PC-3 (cell line): ENCODE measurements at regions of chr19 and their contacts with region 1.

Region 1: GRCh38 chr19:6125571-6125989 is 9.9 kb upstream of the ACSBG2 start:
- DNase-seq: peak; percentile 95
- ATAC-seq: peak; percentile 90
- H3K4me3 ChIP-seq: no peak overlapping the region
- H3K27ac ChIP-seq: no peak overlapping the region
- H3K4me1 ChIP-seq: no peaks in the 10 kb centered on the region
- H3K27me3 ChIP-seq: no peaks in the 10 kb centered on the region
- CTCF ChIP-seq: peak; percentile 99

Region 2: GRCh38 chr19:5987077-5987818 is 138.3 kb before region 1 on chr19:
- CTCF ChIA-PET with region 1: interaction called, 13 read pairs
- POLR2A ChIA-PET with region 1: no interaction called
- intact Hi-C with region 1: loop called (anchors 1 kb)
- DNase-seq: peak; percentile 96
- ATAC-seq: peak; percentile 57
- H3K4me3 ChIP-seq: peak overlapping the region; percentile 57
- H3K27ac ChIP-seq: no peak overlapping the region
- H3K4me1 ChIP-seq: peaks cover 9% of the 10 kb centered on the region; the same call in 1 of the 2 replicates
- H3K27me3 ChIP-seq: no peaks in the 10 kb centered on the region
- CTCF ChIP-seq: peak; percentile 99

Region 3: GRCh38 chr19:6048808-6049405 is 76.7 kb before region 1 on chr19:
- CTCF ChIA-PET with region 1: interaction called, 36 read pairs
- POLR2A ChIA-PET with region 1: no interaction called
- intact Hi-C with region 1: loop called (anchors 1 kb)
- DNase-seq: peak; percentile 93
- ATAC-seq: peak; percentile 98
- H3K4me3 ChIP-seq: peak overlapping the region; percentile 33
- H3K27ac ChIP-seq: no peak overlapping the region
- H3K4me1 ChIP-seq: peaks cover 9% of the 10 kb centered on the region
- H3K27me3 ChIP-seq: no peaks in the 10 kb centered on the region
- CTCF ChIP-seq: peak; percentile 91

Region 4: DNA sequence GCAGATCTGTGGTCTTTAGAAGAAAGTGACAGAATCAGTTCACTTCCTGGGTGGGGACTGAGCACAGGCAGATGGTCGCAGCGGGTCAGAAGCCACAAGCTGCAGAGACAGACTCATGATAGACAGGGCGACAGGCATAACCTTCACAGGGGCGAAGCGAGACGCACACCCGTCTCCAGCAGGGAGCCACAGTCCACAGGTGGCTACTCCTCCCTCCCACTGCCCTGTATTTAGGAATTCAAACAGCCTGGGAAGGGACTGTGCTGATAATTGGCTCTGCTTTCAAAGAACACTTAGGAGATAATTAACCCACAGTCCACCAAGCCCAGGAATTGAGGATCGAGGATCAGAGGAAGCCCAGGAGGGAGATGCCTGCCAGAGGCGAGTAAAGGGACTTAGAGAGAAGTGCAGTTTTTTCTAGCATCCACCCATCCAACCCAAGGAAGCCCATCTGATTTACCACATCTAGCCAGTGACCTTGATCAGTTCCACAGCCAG is 38.5 kb before region 1 on chr19:
- CTCF ChIA-PET with region 1: interaction called, 6 read pairs
- POLR2A ChIA-PET with region 1: interaction called, 8 read pairs
- intact Hi-C with region 1: loop called (anchors 2 kb)
- DNase-seq: no peak
- ATAC-seq: no peak
- H3K4me3 ChIP-seq: no peak overlapping the region
- H3K27ac ChIP-seq: peak overlapping the region; percentile 84
- H3K4me1 ChIP-seq: peaks cover 48% of the 10 kb centered on the region
- H3K27me3 ChIP-seq: no peaks in the 10 kb centered on the region
- CTCF ChIP-seq: no peak

Region 5: GRCh38 chr19:6185093-6185834 is 59.7 kb after region 1 on chr19:
- CTCF ChIA-PET with region 1: no interaction called
- POLR2A ChIA-PET with region 1: no interaction called
- intact Hi-C with region 1: no loop called
- DNase-seq: no peak
- ATAC-seq: no peak; the same call in 1 of the 2 replicates
- H3K4me3 ChIP-seq: no peak overlapping the region
- H3K27ac ChIP-seq: no peak overlapping the region
- H3K4me1 ChIP-seq: no peaks in the 10 kb centered on the region
- H3K27me3 ChIP-seq: peaks cover 4% of the 10 kb centered on the region; the same call in 1 of the 2 replicates
- CTCF ChIP-seq: no peak

Region 6: DNA sequence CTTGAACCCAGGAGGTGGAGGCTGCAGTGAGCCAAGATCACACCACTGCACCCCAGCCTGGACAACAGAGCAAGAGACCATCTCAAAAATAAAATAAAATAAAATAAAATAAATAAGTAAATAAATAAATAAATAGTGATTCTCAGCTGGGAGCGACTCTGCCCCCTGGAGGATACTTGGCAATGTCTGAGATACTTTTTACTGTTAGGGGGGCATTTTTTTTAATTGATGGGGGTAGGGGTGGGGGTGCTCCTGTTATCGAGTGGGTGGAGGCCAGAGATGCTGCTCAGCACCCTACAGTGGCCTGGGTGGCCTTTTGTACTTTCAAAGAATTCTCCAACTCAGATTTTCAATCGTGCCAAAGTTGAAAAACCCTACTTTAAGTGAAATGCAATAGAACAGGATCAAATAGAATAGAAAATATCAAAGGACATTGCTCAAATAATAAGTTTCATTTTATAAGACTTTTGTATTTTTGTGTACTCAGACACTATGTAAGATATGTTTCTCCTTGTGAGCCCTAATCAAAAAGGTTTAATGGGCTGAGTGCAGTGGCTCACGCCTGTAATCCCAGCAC is 228.6 kb after region 1 on chr19:
- CTCF ChIA-PET with region 1: interaction called, 5 read pairs
- POLR2A ChIA-PET with region 1: no interaction called
- intact Hi-C with region 1: loop called (anchors 2 kb)
- DNase-seq: peak; percentile 36
- ATAC-seq: no peak
- H3K4me3 ChIP-seq: no peak overlapping the region
- H3K27ac ChIP-seq: no peak overlapping the region
- H3K4me1 ChIP-seq: peaks cover 11% of the 10 kb centered on the region; the same call in 1 of the 2 replicates
- H3K27me3 ChIP-seq: no peaks in the 10 kb centered on the region
- CTCF ChIP-seq: peak; percentile 61

Region 7: GRCh38 chr19:6424939-6425731 is 299.6 kb after region 1 on chr19:
- CTCF ChIA-PET with region 1: no interaction called
- POLR2A ChIA-PET with region 1: no interaction called
- intact Hi-C with region 1: loop called (anchors 5 kb)
- DNase-seq: peak; percentile 100
- ATAC-seq: peak; percentile 92
- H3K4me3 ChIP-seq: no peak overlapping the region
- H3K27ac ChIP-seq: no peak overlapping the region
- H3K4me1 ChIP-seq: peaks cover 17% of the 10 kb centered on the region; the same call in 1 of the 2 replicates
- H3K27me3 ChIP-seq: no peaks in the 10 kb centered on the region
- CTCF ChIP-seq: no peak